CD4-positive, alpha-beta memory T cell (primary cell): ENCODE measurements at regions of chr13 and their contacts with region 1.

Region 1: GRCh38 chr13:100129605-100130004 is 40.7 kb downstream of the PCCA start:
- DNase-seq: no peak
- H3K4me3 ChIP-seq: no peak overlapping the region
- H3K4me3 Mint-ChIP-seq: no peak overlapping the region
- H3K27ac ChIP-seq: no peak overlapping the region
- H3K27ac Mint-ChIP-seq: peak overlapping the region in 3 of 7 donors; percentile 1 to 64 (median 12)
- H3K4me1 ChIP-seq: no peaks in the 10 kb centered on the region
- H3K4me1 Mint-ChIP-seq: peaks cover 7 to 11% (median 8%) of the 10 kb centered on the region in 4 donors
- H3K27me3 ChIP-seq: no peaks in the 10 kb centered on the region
- H3K27me3 Mint-ChIP-seq: no peaks in the 10 kb centered on the region

Region 2: GRCh38 chr13:100859861-100860260 is 730.3 kb after region 1 on chr13:
- CTCF ChIA-PET with region 1: no interaction called
- POLR2A ChIA-PET with region 1: no interaction called
- intact Hi-C with region 1: loop called (anchors 10 kb)
- DNase-seq: no peak
- H3K4me3 ChIP-seq: no peak overlapping the region
- H3K4me3 Mint-ChIP-seq: no peak overlapping the region
- H3K27ac ChIP-seq: no peak overlapping the region
- H3K27ac Mint-ChIP-seq: no peak overlapping the region
- H3K4me1 ChIP-seq: no peaks in the 10 kb centered on the region
- H3K4me1 Mint-ChIP-seq: peaks cover 0 to 2% (median 0%) of the 10 kb centered on the region in 4 donors
- H3K27me3 ChIP-seq: no peaks in the 10 kb centered on the region
- H3K27me3 Mint-ChIP-seq: peaks cover 2 to 6% of the 10 kb centered on the region in 2 donors